ENCODE measurements at regions of chr4 and their contacts with region 1.

Region 1: GRCh38 chr4:139728840-139729239 is 63.2 kb downstream of the MGST2 start:
- DNase-seq: no peak
- ATAC-seq: no peak
- H3K4me3 ChIP-seq: no peak overlapping the region
- H3K27ac ChIP-seq: no peak overlapping the region
- H3K4me1 ChIP-seq: peaks cover 0 to 14% (median 8%) of the 10 kb centered on the region in 12 donors
- H3K27me3 ChIP-seq: no peaks in the 10 kb centered on the region
- CTCF ChIP-seq: no peak
- POLR2A ChIP-seq: no peak

Region 2: DNA sequence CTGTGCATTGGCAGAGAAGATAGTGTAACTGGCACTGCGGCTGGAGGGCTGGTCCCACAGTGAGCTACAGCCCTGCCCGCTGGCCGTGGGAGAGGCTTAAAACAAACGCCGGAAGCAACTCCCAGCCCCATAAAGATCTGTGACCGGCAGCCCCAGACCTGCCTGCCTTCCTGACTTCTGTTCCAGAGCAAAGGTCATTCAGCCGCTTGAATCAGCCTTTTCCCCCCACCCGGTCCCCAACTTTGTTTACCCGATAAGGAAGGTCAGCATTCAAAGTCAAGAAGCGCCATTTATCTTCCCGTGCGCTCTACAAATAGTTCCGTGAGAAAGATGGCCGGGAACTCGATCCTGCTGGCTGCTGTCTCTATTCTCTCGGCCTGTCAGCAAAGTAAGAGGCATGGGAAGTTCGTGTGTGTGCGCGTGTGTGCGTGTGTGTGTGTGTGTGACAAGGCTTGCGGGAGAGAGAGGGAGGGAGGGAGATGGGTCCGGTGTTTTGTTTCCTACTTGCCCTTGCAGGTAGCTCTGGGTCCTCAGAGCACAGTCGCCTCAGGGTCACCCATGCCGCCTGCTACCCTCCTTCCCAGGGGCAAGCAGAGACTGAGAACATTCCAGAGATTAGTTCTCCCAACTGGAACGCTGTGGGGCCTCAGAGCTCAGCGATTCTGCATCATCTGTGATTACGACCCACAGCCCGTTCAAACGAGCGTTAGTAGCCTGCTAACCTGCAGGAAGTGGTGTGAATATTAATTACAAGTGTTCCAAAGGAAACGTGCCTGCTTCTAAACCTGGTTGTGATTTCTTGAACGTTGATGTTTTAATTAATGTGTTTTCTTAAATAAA is 62.9 kb before region 1 on chr4 and contains the start of gene MGST2:
- intact Hi-C with region 1: loop called in 1 of 10 experiments (anchors 5 kb)
- DNase-seq: peak; percentile 83 to 90 (median 89)
- ATAC-seq: peak; percentile 92 to 94 (median 93)
- H3K4me3 ChIP-seq: peak within 1 kb of the TSS; percentile 49 to 79 (median 58)
- H3K27ac ChIP-seq: peak within 1 kb of the TSS; percentile 76 to 95 (median 93)
- H3K4me1 ChIP-seq: peaks cover 3 to 61% (median 27%) of the 10 kb centered on the region in 12 donors
- H3K27me3 ChIP-seq: no peaks in the 10 kb centered on the region
- CTCF ChIP-seq: peak in 1 of 12 donors; percentile 7
- POLR2A ChIP-seq: peak in 1 of 2 donors; percentile 44
- total RNA-seq, gene MGST2: 94.7 to 122 (median 105) TPM

Region 3: DNA sequence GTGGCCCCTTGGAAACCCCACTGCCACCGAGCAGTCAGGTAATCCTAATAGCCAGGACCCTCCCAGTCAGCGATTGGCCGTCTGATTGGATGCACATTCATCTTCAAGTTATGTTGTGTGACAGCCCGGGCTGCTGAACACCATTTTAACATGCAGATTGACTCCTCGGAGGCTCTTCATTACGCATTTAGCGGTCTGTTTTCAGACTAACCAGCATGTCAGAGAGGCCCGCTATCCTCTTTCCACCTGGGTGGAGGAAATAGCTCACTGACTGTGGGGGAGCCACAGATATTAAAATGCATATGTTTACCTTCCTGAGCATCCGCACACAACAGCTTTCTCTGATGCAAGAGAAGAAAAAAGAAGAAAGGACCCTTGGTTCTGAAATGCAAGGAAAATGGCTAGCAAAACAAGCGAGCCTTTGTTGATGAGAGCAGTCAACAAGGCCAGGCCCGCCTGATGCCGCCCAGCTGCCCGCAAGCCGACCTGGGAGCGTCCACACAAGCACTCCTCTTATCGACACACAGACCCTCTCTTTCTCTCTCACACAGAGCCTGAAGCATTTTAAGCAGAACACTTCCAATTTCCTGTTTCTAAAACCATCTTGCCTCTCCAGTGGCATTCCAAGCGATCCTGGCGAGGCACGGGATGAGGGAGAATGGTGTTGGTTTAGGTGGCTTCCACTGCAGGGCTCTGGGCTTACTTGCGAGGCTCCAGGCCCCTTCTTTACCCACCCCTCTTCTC is 55.1 kb after region 1 on chr4:
- intact Hi-C with region 1: no loop called
- DNase-seq: no peak
- ATAC-seq: no peak
- H3K4me3 ChIP-seq: no peak overlapping the region
- H3K27ac ChIP-seq: peak overlapping the region in 1 of 12 donors; percentile 18
- H3K4me1 ChIP-seq: peaks cover 0 to 8% (median 0%) of the 10 kb centered on the region in 12 donors
- H3K27me3 ChIP-seq: no peaks in the 10 kb centered on the region
- CTCF ChIP-seq: no peak
- POLR2A ChIP-seq: no peak